Activated CD4-positive, alpha-beta T cell treated with anti-CD3 and anti-CD28 coated beads for 36 hours (primary cell): ENCODE measurements at regions of chr1 and their contacts with region 1.

Region 1: DNA sequence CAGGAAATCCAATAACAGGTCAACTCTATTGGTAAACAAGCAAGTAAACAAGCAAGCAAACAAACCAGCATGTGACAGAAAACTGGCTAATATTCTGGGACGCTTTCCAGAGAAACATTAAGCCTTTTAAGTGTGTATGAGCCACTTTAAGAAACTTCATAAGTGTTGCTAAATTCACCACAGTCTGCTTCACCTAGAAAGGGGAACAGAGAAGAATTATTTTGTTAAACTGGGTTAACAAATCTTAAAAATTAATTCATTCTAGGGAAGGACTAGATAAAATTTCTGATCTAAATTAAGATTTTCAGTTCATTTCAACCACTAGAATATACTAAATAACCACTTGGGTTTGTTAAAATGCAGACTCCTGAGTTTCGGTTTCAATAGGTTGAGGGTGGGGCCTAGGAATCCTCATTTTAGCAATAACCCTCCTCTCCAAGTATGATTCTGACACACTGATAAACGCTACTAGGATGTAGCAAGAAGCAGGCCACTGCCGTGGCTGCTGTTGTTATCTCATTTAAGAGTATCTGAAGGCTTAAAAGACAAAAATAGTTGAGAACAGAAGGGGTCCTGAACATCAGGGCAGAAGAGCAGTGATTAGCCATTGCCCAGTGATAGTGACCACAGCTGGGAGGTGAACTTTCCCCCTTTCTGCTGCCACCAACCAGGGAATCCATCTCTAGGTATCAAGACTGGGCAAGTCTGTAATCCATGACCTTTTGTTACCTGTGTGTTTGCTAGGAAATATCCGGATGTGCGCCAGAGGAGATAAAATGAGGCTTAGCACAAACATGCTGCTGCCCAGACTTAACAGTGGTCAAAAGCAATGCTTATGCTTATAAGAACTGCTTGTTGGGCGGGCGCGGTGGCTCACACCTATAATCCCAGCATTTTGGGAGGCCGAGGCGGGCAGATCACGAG is 11.2 kb downstream of the CREG1 start:
- DNase-seq: no peak
- ATAC-seq: peak; percentile 64
- H3K4me3 Mint-ChIP-seq: no peak overlapping the region
- H3K27ac Mint-ChIP-seq: peak overlapping the region; percentile 10
- H3K4me1 Mint-ChIP-seq: peaks cover 37% of the 10 kb centered on the region
- H3K27me3 Mint-ChIP-seq: no peaks in the 10 kb centered on the region

Region 2: GRCh38 chr1:167121375-167122120 is 420.8 kb before region 1 on chr1:
- CTCF ChIA-PET with region 1: no interaction called
- POLR2A ChIA-PET with region 1: no interaction called
- intact Hi-C with region 1: loop called in 1 of 2 experiments (anchors 5 kb)
- DNase-seq: peak; percentile 56
- ATAC-seq: peak; percentile 64
- H3K4me3 Mint-ChIP-seq: peak overlapping the region; percentile 65
- H3K27ac Mint-ChIP-seq: peak overlapping the region; percentile 66
- H3K4me1 Mint-ChIP-seq: no peaks in the 10 kb centered on the region
- H3K27me3 Mint-ChIP-seq: no peaks in the 10 kb centered on the region

Region 3: GRCh38 chr1:167409183-167409582 is 133.2 kb before region 1 on chr1:
- CTCF ChIA-PET with region 1: interaction called, 13 read pairs
- POLR2A ChIA-PET with region 1: no interaction called
- intact Hi-C with region 1: no loop called
- DNase-seq: no peak
- ATAC-seq: no peak
- H3K4me3 Mint-ChIP-seq: no peak overlapping the region
- H3K27ac Mint-ChIP-seq: no peak overlapping the region
- H3K4me1 Mint-ChIP-seq: peaks cover 19% of the 10 kb centered on the region
- H3K27me3 Mint-ChIP-seq: no peaks in the 10 kb centered on the region

Region 4: GRCh38 chr1:167447521-167448136 is 94.7 kb before region 1 on chr1:
- CTCF ChIA-PET with region 1: interaction called, 15 read pairs
- POLR2A ChIA-PET with region 1: no interaction called
- intact Hi-C with region 1: no loop called
- DNase-seq: peak; percentile 87
- ATAC-seq: peak; percentile 86
- H3K4me3 Mint-ChIP-seq: peak overlapping the region; percentile 56
- H3K27ac Mint-ChIP-seq: peak overlapping the region; percentile 94
- H3K4me1 Mint-ChIP-seq: peaks cover 86% of the 10 kb centered on the region
- H3K27me3 Mint-ChIP-seq: no peaks in the 10 kb centered on the region

Region 5: DNA sequence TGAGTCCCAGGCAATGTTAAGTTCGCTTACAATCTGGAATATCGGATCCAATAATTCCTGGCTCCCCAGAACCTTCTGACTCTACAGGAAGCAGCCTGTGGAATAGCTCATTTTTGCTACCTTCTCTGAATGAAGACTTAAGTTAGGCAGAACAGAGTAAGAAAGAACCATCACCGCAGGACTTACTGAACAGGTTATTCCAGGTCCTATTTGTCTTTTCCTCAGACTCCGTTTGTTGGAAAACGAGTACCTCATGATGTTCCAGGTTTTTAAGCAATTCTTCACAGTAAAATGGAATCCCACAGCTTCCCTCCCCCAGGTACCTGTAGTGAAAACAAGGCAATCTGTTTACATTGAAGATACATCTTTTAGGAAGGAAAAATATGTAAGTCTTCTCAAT is 311.8 kb after region 1 on chr1:
- CTCF ChIA-PET with region 1: no interaction called
- POLR2A ChIA-PET with region 1: no interaction called
- intact Hi-C with region 1: no loop called
- DNase-seq: no peak
- ATAC-seq: no peak
- H3K4me3 Mint-ChIP-seq: no peak overlapping the region
- H3K27ac Mint-ChIP-seq: no peak overlapping the region
- H3K4me1 Mint-ChIP-seq: no peaks in the 10 kb centered on the region
- H3K27me3 Mint-ChIP-seq: no peaks in the 10 kb centered on the region